ENCODE measurements at regions of chr7 and their contacts with region 1.

Region 1: DNA sequence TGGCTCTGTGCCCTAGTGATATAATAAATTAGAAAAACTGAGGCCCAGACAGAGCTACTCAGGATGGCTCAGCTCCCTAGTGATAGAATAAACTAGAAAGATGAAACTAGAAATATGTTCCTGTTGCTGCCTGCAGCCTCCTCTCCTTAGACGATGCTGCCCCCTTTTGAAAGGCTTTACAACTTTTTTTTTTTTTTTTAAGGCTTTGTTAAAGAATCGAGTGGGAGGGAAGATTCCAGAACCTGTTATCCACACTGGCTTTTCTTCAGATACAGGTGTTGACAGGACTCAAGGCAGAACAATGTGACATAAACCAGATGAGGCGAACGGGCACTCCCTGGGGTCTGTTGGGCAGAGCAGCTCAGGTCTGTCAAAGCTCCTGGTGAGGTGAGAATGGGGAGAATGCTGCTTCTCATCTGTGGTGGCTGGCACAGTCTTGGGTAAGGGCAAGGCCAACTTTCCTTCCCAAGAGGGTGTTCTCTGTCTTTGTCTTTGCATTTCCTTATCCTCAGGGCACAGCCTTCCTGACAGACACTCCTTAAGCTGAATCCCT is 175.1 kb downstream of the COBL start:
- DNase-seq: peak in 4 of 9 donors; percentile 16 to 39 (median 26)
- ATAC-seq: peak; percentile 24
- H3K4me3 ChIP-seq: no peak overlapping the region
- H3K4me3 Mint-ChIP-seq: no peak overlapping the region
- H3K27ac ChIP-seq: no peak overlapping the region
- H3K27ac Mint-ChIP-seq: no peak overlapping the region
- H3K4me1 ChIP-seq: no peaks in the 10 kb centered on the region
- H3K4me1 Mint-ChIP-seq: peaks cover 0 to 17% (median 4%) of the 10 kb centered on the region in 7 donors
- H3K27me3 ChIP-seq: no peaks in the 10 kb centered on the region
- H3K27me3 Mint-ChIP-seq: peaks cover 0 to 10% (median 5%) of the 10 kb centered on the region in 5 donors

Region 2: DNA sequence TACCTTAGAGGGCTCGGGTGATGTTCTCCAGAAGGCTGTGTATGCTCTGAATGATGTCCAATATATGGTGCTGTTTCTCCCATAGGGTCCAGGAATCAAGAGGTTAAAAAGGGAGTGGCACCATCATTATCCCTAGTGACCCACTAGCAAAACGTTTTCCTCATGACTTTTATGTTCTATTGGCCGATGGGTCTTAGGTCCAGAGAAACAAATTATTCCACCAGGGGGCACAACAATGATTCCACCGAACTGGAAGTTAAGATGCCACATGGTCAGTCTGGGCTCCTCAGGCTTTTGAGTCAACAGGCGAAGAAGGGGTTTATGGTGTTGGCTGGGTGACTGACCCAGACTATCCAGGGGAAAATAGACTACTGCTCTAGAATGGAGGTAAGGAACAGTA is 81.0 kb before region 1 on chr7:
- CTCF ChIA-PET with region 1: no interaction called
- POLR2A ChIA-PET with region 1: no interaction called
- intact Hi-C with region 1: loop called in 1 of 2 experiments (anchors 1 kb)
- DNase-seq: no peak
- ATAC-seq: no peak
- H3K4me3 ChIP-seq: no peak overlapping the region
- H3K4me3 Mint-ChIP-seq: no peak overlapping the region
- H3K27ac ChIP-seq: no peak overlapping the region
- H3K27ac Mint-ChIP-seq: no peak overlapping the region
- H3K4me1 ChIP-seq: no peaks in the 10 kb centered on the region
- H3K4me1 Mint-ChIP-seq: peaks cover 0 to 2% (median 0%) of the 10 kb centered on the region in 7 donors
- H3K27me3 ChIP-seq: no peaks in the 10 kb centered on the region
- H3K27me3 Mint-ChIP-seq: peaks cover 0 to 4% (median 0%) of the 10 kb centered on the region in 5 donors

Region 3: GRCh38 chr7:51102828-51103227 is 38.7 kb before region 1 on chr7:
- CTCF ChIA-PET with region 1: no interaction called
- POLR2A ChIA-PET with region 1: no interaction called
- intact Hi-C with region 1: no loop called
- DNase-seq: no peak
- ATAC-seq: no peak
- H3K4me3 ChIP-seq: no peak overlapping the region
- H3K4me3 Mint-ChIP-seq: no peak overlapping the region
- H3K27ac ChIP-seq: no peak overlapping the region
- H3K27ac Mint-ChIP-seq: no peak overlapping the region
- H3K4me1 ChIP-seq: no peaks in the 10 kb centered on the region
- H3K4me1 Mint-ChIP-seq: no peaks in the 10 kb centered on the region
- H3K27me3 ChIP-seq: no peaks in the 10 kb centered on the region
- H3K27me3 Mint-ChIP-seq: peaks cover 0 to 3% (median 3%) of the 10 kb centered on the region in 5 donors

Measured in naive thymus-derived CD4-positive, alpha-beta T cell (primary cell).